Mammary epithelial cell (primary cell): ENCODE measurements at regions of chr1 and their contacts with region 1.

Region 1: DNA sequence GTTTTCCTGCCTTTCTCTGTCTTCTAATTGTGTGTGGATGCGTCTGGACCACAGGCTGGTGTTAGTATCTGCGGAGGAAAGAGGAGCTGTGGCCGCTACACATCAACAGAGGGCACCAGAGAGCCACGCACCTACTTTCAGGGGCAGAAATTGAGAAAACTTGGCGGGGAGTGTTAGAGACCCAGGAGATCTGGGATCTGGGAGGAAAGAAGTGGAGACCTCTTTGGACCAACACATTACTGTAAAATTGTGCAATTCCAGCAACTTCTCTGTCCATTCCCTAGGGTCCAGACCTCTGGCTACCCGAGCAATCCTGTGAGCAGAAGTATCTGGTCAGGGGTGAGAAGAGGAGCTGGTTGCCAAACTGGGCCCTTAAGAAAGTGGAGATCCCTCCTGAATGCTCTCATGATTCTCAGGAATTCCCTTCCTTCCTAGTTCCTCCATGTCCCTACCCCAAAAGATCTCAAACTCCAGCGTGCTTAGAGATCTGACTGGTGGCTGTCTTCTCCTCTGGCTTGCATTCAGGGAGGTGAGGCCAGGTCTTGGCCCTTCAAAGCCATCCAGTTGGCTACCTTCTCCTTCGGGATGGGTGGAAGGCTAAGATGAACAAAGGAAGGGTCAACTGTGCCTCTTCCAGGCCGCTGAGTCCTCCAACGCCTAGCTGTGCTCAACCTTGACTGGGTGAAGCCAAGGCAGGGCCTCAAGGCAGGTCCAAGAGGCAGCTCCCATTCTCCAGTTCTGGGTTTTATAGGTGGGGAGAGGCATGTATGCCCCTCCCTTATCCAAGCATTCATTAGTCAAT is 1.2 kb upstream of the KIRREL1 start:
- DNase-seq: peak; percentile 55
- H3K4me3 ChIP-seq: no peak overlapping the region
- H3K27ac ChIP-seq: no peak overlapping the region
- H3K4me1 ChIP-seq: peaks cover 16% of the 10 kb centered on the region
- H3K27me3 ChIP-seq: no peaks in the 10 kb centered on the region
- CTCF ChIP-seq: peak; percentile 99

Region 2: DNA sequence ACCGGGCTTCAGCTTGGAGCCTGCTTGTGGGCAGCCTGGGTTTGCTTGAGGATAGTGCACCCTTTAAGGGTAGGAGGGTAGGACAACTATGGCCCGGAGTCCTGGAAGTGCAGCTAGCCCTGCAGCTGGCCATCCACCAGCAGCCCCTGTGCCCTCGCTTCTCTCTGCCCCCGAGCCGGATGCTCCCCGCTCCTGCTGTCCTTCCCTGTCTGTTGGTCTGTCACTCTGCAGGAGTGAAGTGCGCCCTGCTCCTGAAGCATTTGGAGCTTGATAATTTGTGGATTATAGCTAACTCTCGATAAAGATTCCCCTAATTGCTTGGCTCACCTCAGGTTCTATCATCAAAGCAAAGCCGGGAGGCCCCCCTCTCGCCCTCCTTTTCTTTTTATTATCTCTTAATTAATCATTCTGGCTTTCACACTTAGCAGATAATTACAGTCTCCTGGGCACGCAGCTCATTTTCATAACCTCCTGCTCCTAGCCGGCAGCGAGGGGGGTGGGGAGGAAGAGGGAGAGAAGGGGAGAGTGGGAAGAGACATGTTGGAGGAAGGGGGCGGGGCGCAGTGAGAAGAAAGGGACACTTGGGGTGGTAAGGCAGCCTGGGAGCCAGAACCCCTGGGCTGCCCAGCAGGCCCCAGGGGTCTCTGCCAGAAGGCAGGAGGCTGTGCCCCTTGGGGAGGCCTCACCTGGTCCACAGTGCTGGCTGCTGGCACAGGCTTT is 15.6 kb after region 1 on chr1:
- CTCF ChIA-PET with region 1: interaction called, 5 read pairs
- dilution Hi-C with region 1: no loop called
- in situ Hi-C with region 1: no loop called
- intact Hi-C with region 1: loop called (anchors 1 kb)
- DNase-seq: no peak
- H3K4me3 ChIP-seq: no peak overlapping the region
- H3K27ac ChIP-seq: peak overlapping the region; percentile 75
- H3K4me1 ChIP-seq: peaks cover 88% of the 10 kb centered on the region
- H3K27me3 ChIP-seq: no peaks in the 10 kb centered on the region
- CTCF ChIP-seq: no peak

Region 3: DNA sequence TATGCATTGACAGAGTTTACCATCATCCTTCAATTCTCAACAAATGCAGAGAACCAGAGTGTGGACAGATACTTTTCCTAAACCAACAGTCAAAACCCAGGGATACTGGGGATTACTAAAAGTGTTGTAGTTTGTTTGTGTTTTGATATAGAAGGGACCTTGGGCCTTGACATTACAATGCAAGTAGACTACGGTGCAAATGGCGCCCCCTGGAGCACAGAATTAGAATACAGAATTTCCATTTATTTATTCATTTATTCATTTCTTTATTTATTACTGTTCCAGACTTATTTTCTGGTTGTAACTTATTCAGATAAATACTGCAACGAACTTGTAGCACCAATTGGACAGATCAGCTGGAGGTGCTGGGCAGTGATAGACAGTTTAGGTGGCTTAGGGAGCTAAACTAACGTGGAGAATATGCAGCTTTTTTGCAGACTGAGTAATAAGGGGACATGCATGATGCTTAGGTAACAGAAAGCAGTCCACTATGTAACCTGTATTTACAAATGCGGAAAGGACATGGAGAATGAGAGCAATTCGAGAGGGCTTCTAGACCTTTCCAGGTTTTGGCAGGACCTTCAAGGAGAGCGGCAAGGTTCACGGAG is 43.8 kb after region 1 on chr1:
- CTCF ChIA-PET with region 1: interaction called, 13 read pairs
- dilution Hi-C with region 1: no loop called
- in situ Hi-C with region 1: loop called in 1 of 2 experiments (anchors 5 kb)
- intact Hi-C with region 1: loop called (anchors 1 kb)
- DNase-seq: peak; percentile 24
- H3K4me3 ChIP-seq: no peak overlapping the region
- H3K27ac ChIP-seq: no peak overlapping the region
- H3K4me1 ChIP-seq: peaks cover 30% of the 10 kb centered on the region
- H3K27me3 ChIP-seq: no peaks in the 10 kb centered on the region
- CTCF ChIP-seq: peak; percentile 70 to 72

Region 4: DNA sequence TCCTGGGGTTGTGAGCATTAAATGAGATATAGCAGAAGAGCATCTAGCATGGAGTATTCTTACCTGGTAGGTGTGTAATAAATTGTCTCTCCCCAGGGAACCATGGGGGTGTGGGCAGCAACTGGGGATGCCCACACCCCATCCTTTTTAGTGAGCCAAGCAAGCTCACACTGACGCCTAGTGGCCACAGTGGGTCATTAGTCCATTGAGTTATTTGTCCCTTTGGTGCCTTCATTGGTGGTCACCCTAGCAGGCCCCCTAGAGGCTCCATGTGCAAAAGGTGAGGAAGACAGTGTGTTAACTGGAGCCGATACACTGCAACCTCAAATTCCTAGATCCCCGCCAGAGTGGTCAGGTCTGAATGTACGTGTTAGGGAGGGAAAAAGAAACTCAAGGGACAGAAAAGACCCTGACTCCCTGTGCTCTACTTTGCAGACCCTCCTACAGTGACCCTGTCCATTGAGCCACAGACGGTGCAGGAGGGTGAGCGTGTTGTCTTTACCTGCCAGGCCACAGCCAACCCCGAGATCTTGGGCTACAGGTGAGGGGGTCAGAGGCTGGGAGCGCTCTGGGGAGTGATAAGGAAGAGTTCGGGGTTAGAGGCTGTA is 95.2 kb after region 1 on chr1:
- CTCF ChIA-PET with region 1: interaction called, 9 read pairs
- dilution Hi-C with region 1: no loop called
- in situ Hi-C with region 1: no loop called
- intact Hi-C with region 1: loop called (anchors 1 kb)
- DNase-seq: peak; percentile 35
- H3K4me3 ChIP-seq: no peak overlapping the region
- H3K27ac ChIP-seq: no peak overlapping the region
- H3K4me1 ChIP-seq: no peaks in the 10 kb centered on the region
- H3K27me3 ChIP-seq: no peaks in the 10 kb centered on the region
- CTCF ChIP-seq: peak; percentile 86 to 92

Region 5: GRCh38 chr1:158112994-158113758 is 120.9 kb after region 1 on chr1:
- CTCF ChIA-PET with region 1: interaction called, 27 read pairs
- dilution Hi-C with region 1: no loop called
- in situ Hi-C with region 1: loop called (anchors 10 kb)
- intact Hi-C with region 1: loop called (anchors 1 kb)
- DNase-seq: no peak
- H3K4me3 ChIP-seq: peak overlapping the region; percentile 33 to 43 (median 38)
- H3K27ac ChIP-seq: no peak overlapping the region
- H3K4me1 ChIP-seq: peaks cover 4% of the 10 kb centered on the region
- H3K27me3 ChIP-seq: no peaks in the 10 kb centered on the region
- CTCF ChIP-seq: peak; percentile 14 to 37